Activated CD4-positive, alpha-beta T cell treated with anti-CD3 and anti-CD28 coated beads, Interleukin-2, amount 10 ng/mL, durations not matched to agents 24 days and 14 days (primary cell): ENCODE measurements at regions of chr1 and their contacts with region 1.

Region 1: DNA sequence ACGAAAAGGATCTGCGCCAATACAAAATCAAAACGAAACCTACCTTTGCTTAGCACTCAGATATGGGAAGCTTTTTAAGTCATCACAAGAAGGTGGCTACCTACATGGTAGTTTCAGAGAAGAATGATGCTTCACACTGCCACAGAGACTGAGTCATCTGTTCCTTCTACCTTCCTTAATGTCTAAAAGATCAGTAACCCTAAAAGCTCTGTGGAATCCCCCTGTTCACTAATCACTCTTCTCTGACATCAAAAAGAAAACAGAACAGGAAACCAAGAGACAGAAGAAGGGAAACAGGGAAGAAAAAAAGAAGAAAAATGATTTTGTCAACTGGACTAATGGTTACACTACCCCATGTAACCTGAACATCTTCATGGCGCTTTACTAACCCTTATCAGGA is 177.2 kb downstream of the SMYD3 start:
- DNase-seq: peak; percentile 82
- H3K4me3 Mint-ChIP-seq: peak overlapping the region; percentile 36
- H3K27ac Mint-ChIP-seq: peak overlapping the region; percentile 73
- H3K4me1 Mint-ChIP-seq: peaks cover 39% of the 10 kb centered on the region
- H3K27me3 Mint-ChIP-seq: no peaks in the 10 kb centered on the region

Region 2: GRCh38 chr1:245953876-245954660 is 375.8 kb before region 1 on chr1:
- intact Hi-C with region 1: loop called (anchors 5 kb)
- DNase-seq: peak; percentile 67
- H3K4me3 Mint-ChIP-seq: peak overlapping the region; percentile 86
- H3K27ac Mint-ChIP-seq: peak overlapping the region; percentile 88
- H3K4me1 Mint-ChIP-seq: peaks cover 20% of the 10 kb centered on the region
- H3K27me3 Mint-ChIP-seq: no peaks in the 10 kb centered on the region

Region 3: DNA sequence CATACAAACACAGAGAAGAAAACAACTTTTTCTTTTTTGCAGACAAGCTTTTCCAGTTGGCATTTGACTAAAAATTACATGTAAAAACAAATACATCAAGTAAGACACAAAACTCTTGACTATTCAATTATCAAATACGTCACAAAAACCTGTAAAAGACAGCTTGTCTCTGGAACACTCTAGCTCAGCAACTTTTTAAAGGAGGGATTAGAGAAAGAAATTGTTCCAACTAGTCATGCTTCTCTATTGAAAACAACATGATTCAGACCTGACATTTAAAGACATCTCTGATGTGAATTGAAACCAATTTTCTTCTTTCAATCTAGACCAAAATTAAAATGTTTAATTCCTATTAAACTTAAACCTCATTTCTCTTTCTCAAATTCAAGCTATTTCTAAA is 146.9 kb after region 1 on chr1:
- intact Hi-C with region 1: loop called (anchors 5 kb)
- DNase-seq: no peak
- H3K4me3 Mint-ChIP-seq: no peak overlapping the region
- H3K27ac Mint-ChIP-seq: no peak overlapping the region
- H3K4me1 Mint-ChIP-seq: peaks cover 9% of the 10 kb centered on the region
- H3K27me3 Mint-ChIP-seq: no peaks in the 10 kb centered on the region

Region 4: DNA sequence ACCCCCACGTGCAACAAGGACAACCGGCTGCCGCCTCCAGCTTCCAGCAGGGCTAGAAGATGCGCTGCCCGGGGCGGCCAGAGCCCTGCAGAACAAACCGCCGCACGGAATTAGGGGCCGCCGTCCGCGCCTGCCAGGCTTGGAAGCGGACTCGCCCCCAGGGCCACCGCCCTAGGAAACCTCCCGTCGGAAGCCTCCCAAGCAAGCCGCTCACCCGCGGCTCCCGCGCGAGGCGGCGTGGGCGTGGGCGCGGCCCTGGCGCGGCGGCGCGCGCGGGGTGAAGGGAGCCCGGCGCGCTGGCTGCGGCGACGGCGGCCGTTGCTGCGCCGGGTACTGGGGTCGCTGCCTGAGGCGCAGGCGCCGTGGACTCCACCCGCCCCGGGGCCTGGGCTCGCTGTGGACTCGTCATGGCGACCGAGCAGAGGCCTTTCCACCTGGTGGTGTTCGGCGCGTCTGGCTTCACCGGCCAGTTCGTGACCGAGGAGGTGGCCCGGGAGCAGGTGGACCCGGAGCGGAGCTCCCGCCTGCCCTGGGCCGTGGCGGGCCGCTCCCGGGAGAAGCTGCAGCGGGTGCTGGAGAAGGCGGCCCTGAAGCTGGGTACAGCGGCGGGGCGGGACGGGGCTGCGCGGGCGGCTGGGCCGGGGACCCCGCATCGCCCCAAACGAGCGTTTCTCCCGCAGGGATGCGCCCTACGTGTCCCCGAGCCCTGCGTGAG is 394.3 kb after region 1 on chr1 and contains the start of gene SCCPDH:
- intact Hi-C with region 1: loop called (anchors 10 kb)
- DNase-seq: peak; percentile 91
- H3K4me3 Mint-ChIP-seq: peak within 1 kb of the TSS; percentile 91
- H3K27ac Mint-ChIP-seq: peak within 1 kb of the TSS; percentile 84
- H3K4me1 Mint-ChIP-seq: peaks cover 5% of the 10 kb centered on the region
- H3K27me3 Mint-ChIP-seq: no peaks in the 10 kb centered on the region
- total RNA-seq, gene SCCPDH: 31.7 and 32.3 TPM in 2 replicates

Region 5: DNA sequence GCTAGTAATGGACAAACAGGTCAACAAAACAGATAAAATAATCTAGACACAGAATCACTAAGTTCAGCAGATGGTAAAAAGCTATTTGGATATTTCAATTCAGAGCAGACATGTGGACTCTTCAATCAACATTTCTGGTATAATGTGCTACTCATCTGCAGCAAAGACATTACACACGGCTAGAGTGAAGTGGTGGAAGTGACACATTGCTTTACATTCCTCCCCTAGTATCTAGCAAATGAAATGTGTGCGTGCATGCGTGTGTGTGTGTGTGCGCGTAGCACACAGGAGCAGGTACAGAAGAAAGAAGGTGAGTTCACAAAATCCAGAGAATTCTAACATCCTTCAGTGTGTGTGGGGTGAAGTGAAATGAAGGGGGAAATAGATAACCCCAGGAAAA is 593.6 kb after region 1 on chr1:
- intact Hi-C with region 1: no loop called
- DNase-seq: no peak
- H3K4me3 Mint-ChIP-seq: no peak overlapping the region
- H3K27ac Mint-ChIP-seq: no peak overlapping the region
- H3K4me1 Mint-ChIP-seq: peaks cover 18% of the 10 kb centered on the region
- H3K27me3 Mint-ChIP-seq: no peaks in the 10 kb centered on the region